ENCODE measurements at regions of chr7 and their contacts with region 1.

Region 1: DNA sequence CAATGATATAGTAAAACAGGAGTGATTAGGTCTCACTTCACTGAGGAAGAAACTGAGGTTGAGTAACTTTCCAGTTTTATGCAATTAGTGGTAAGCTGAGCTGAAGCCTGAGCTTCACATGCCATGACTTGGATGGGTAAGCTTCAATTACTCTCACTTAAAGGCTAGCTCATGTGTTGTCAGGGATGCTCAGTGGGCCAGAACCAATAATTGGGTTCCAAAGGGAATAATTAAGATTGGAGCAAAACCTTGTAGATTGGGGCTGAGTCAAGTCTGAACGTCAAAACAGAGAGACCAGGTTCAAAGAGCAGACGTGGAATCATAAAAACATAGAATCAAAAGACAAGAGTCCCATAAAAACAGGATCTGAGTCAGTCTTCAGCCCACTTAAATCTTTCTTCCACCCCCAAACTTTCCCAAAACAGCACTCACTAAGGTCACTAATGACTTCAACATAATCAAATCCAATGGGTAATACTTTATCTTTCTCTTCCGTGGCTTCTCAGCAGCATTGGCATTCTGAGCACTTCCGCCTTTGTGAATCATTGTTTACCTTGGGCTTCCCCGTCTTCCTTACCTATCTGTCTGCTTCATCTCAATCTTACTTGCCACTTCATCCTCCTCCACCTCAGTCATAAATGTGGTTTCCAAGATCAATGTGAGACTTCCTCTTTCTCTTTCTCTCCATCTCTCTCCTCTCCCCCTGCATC is 23.0 kb upstream of the EGFR start:
- DNase-seq: peak; percentile 50
- H3K4me3 Mint-ChIP-seq: no peak overlapping the region
- H3K27ac Mint-ChIP-seq: peak overlapping the region; percentile 65
- H3K4me1 Mint-ChIP-seq: peaks cover 29% of the 10 kb centered on the region
- H3K27me3 Mint-ChIP-seq: peaks cover 7% of the 10 kb centered on the region

Region 2: DNA sequence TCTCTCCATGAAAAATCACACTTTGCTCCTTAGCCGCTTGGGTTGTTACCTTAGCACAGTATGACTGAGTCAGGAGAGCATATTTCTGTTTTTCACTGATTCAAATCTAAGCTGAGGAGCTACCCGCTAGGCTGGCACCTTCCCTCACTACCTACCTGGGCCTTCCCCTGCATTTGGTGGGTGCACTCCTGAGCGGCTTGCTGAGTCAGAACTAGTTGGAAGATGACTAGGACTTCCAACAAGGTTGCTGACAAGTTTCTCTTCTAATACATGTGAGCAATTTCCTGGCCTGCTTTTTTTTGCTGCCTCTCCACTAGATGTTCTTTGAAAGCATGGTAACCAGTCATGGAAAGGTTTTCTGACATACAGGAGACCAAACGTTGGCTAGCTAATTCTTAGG is 192.9 kb before region 1 on chr7:
- CTCF ChIA-PET with region 1: no interaction called
- POLR2A ChIA-PET with region 1: no interaction called
- intact Hi-C with region 1: loop called (anchors 2 kb)
- DNase-seq: peak; percentile 72
- H3K4me3 Mint-ChIP-seq: no peak overlapping the region
- H3K27ac Mint-ChIP-seq: no peak overlapping the region
- H3K4me1 Mint-ChIP-seq: peaks cover 6% of the 10 kb centered on the region
- H3K27me3 Mint-ChIP-seq: peaks cover 16% of the 10 kb centered on the region

Region 3: DNA sequence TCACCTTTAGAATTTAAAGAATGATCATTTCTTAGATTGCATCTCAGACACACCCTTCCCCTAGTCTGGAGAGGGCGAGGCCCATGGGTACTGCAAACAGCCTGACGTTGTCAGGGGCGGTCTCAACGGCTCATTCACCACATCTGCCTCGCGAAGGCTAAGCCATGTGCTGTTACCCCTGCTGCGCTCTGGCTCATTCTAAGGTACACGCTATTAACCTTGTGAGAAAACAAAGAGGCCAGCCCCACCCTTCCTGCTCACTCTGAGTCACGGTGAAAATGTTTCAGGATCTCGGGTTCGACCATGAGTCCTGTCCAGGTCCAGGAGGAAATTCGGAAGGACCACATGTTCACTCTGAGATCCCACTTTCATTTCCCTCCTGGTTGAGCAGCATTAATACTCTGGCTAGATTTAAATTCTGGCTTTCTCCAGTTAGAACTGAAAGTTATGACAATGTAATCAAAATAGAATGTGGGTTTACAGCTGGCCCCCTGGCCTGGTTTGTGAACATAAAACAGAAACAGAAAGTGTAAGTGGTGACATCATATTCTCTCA is 78.2 kb after region 1 on chr7:
- CTCF ChIA-PET with region 1: no interaction called
- POLR2A ChIA-PET with region 1: interaction called, 4 read pairs
- intact Hi-C with region 1: loop called (anchors 5 kb)
- DNase-seq: peak; percentile 54
- H3K4me3 Mint-ChIP-seq: peak overlapping the region; percentile 10
- H3K27ac Mint-ChIP-seq: no peak overlapping the region
- H3K4me1 Mint-ChIP-seq: peaks cover 13% of the 10 kb centered on the region
- H3K27me3 Mint-ChIP-seq: peaks cover 1% of the 10 kb centered on the region

Region 4: GRCh38 chr7:55086413-55087201 is 90.8 kb after region 1 on chr7:
- CTCF ChIA-PET with region 1: no interaction called
- POLR2A ChIA-PET with region 1: no interaction called
- intact Hi-C with region 1: loop called (anchors 2 kb)
- DNase-seq: peak; percentile 24
- H3K4me3 Mint-ChIP-seq: no peak overlapping the region
- H3K27ac Mint-ChIP-seq: no peak overlapping the region
- H3K4me1 Mint-ChIP-seq: peaks cover 11% of the 10 kb centered on the region
- H3K27me3 Mint-ChIP-seq: peaks cover 12% of the 10 kb centered on the region

Region 5: GRCh38 chr7:55309040-55309991 is 313.5 kb after region 1 on chr7:
- CTCF ChIA-PET with region 1: no interaction called
- POLR2A ChIA-PET with region 1: interaction called, 6 read pairs
- intact Hi-C with region 1: loop called (anchors 1 kb)
- DNase-seq: peak; percentile 95
- H3K4me3 Mint-ChIP-seq: peak overlapping the region; percentile 16
- H3K27ac Mint-ChIP-seq: peak overlapping the region; percentile 90
- H3K4me1 Mint-ChIP-seq: peaks cover 43% of the 10 kb centered on the region
- H3K27me3 Mint-ChIP-seq: peaks cover 25% of the 10 kb centered on the region

Region 6: GRCh38 chr7:55509322-55509721 is 513.5 kb after region 1 on chr7:
- CTCF ChIA-PET with region 1: no interaction called
- POLR2A ChIA-PET with region 1: no interaction called
- intact Hi-C with region 1: loop called (anchors 2 kb)
- DNase-seq: no peak
- H3K4me3 Mint-ChIP-seq: no peak overlapping the region
- H3K27ac Mint-ChIP-seq: peak overlapping the region; percentile 45
- H3K4me1 Mint-ChIP-seq: peaks cover 79% of the 10 kb centered on the region
- H3K27me3 Mint-ChIP-seq: no peaks in the 10 kb centered on the region